Posterior vena cava (tissue), 2 donors: ENCODE measurements at regions of chr20 and their contacts with region 1.

Region 1: GRCh38 chr20:59664421-59664941 is 60.1 kb downstream of the PHACTR3 start:
- DNase-seq: no peak

Region 2: DNA sequence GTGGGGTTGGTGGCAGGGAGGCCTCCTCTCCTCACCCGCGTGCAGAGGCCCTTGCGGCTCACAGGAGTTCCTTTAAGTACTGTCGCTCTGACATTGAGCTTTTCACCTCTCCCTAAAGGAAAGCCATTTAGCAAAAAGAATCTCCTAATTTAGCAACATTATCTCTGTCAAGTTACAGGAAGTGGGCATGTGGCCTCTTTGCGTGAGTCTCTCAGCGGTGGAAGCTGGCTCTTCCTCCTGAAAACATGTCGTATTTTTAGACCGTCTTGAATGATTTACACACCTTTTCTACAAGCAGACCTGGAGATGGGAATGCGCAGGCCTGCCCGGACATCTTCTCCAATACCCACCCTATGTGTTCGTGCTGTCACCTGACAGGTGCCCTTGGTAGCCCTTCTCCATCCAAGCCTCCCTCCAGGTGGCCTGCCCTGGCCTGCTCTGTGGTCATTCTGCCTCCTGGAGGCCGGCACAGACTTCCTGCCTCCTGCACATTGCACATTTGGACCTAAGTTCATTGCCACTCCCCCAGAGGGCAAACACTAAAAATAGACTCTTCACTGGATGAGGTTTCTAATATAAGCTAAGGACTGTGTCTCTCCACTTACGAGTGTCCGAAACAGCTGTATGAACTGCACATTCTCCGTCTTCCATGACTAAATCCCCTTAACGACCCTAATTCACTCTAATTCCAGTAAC is 78.6 kb before region 1 on chr20:
- intact Hi-C with region 1: no loop called
- DNase-seq: peak; percentile 32

Region 3: GRCh38 chr20:59688999-59689398 is 24.5 kb after region 1 on chr20:
- intact Hi-C with region 1: no loop called
- DNase-seq: no peak

Region 4: DNA sequence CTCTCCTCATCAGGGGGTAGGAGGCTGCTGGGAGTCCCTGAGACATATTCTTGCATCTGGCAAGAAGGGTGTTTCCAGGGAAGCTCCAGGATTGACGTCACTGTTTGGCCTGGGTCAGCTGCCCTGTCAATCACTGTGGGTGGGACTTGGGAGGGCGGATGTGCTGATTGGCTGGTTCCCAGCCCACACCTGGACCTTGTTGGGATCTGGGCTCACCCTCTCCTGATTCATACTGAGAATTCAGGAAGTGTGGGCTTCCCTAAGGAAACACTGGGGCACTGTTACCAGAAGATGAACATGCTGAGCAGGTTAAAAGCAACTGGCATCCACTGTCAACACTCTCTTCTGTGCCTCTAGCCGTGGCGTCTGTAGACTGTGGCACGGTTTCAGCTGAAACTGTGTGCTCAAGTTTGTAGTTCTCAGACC is 330.2 kb after region 1 on chr20:
- intact Hi-C with region 1: loop called in 1 of 2 experiments (anchors 5 kb)
- DNase-seq: no peak